ENCODE measurements at regions of chr17 and their contacts with region 1.

Region 1: DNA sequence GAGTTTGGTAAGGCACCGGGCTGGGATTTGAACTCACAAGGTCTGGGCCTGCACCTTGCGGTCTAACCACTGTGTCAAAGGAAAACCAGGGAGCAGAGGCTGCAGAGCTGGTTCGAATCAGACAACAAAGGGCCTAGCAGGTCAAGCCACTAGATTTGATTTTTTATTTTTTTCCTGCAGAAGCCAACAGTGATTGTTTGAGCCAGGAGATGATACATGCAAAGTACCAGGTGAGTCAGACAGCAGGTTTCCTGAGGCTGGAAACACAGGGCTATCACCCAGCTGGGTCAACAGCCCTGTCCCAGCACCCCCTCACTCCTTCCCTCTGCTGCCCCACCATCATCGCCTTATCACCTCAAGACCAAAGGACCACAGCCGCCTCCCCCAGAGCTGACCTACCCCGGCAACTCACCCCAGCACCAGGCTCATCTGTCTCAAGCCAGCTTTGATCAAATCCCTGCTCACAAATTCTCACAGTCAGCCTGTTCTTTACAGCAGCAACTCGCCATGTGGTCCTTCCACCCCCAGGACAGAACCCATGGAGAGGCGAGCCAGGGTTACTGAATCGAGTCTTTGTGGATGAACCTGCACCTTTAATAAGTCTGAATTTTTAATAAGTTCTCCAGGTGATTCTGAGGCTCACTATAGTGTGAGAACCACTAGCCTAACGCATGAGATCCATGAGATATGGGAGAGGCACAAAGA is 13.0 kb upstream of the KRT19 start:
- DNase-seq: peak; percentile 56
- H3K4me3 Mint-ChIP-seq: no peak overlapping the region
- H3K27ac Mint-ChIP-seq: peak overlapping the region; percentile 80
- H3K4me1 Mint-ChIP-seq: peaks cover 95% of the 10 kb centered on the region
- H3K27me3 Mint-ChIP-seq: no peaks in the 10 kb centered on the region
- CTCF ChIP-seq: no peak

Region 2: DNA sequence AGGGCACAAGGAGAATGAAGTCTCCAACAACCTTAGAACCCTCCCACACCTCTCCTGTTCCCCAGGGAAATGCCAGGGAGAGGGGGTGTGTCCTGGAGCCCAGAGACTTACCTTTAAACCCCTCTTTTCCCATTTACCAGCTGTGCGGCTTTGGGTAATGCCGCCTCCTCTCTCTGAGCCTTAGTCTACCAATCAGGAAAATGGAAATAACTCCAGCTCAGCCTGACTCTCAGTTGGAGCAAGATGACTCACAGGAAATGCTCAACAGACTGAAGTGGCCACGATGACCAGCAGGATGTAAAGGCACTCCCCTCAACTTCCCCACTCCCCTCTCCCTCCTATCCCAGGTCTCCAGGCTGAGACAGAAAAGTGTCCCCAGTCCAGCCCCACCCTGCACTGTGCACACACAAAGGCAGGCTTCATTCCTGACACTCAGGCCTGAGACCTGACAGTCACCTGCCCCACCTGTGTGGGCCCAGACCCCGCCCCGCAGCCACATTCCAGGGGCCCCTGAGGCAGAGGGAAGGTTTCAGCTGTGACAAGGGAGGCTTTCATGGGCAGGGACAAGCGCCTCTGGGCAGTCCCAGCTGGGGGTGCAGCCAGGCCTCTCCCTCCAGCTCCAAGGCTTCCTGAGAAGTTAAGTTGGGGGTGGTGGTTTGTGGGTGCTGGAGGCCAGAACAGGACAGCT is 19.4 kb before region 1 on chr17:
- CTCF ChIA-PET with region 1: interaction called, 471 read pairs
- intact Hi-C with region 1: no loop called
- DNase-seq: peak; percentile 100
- H3K4me3 Mint-ChIP-seq: peak overlapping the region; percentile 95
- H3K27ac Mint-ChIP-seq: peak overlapping the region; percentile 99
- H3K4me1 Mint-ChIP-seq: peaks cover 73% of the 10 kb centered on the region
- H3K27me3 Mint-ChIP-seq: no peaks in the 10 kb centered on the region
- CTCF ChIP-seq: peak; percentile 11

Region 3: GRCh38 chr17:41530062-41531051 is 10.7 kb before region 1 on chr17:
- CTCF ChIA-PET with region 1: interaction called, 471 read pairs
- intact Hi-C with region 1: no loop called
- DNase-seq: peak; percentile 93
- H3K4me3 Mint-ChIP-seq: peak overlapping the region; percentile 95
- H3K27ac Mint-ChIP-seq: peak overlapping the region; percentile 99
- H3K4me1 Mint-ChIP-seq: peaks cover 62% of the 10 kb centered on the region
- H3K27me3 Mint-ChIP-seq: no peaks in the 10 kb centered on the region
- CTCF ChIP-seq: no peak

Measured in Calu3 (cell line).